Activated CD4-positive, alpha-beta T cell treated with anti-CD3 and anti-CD28 coated beads, Interleukin-2, amount 10 ng/mL, durations not matched to agents 24 days and 14 days (primary cell): ENCODE measurements at regions of chr1 and their contacts with region 1.

Region 1: DNA sequence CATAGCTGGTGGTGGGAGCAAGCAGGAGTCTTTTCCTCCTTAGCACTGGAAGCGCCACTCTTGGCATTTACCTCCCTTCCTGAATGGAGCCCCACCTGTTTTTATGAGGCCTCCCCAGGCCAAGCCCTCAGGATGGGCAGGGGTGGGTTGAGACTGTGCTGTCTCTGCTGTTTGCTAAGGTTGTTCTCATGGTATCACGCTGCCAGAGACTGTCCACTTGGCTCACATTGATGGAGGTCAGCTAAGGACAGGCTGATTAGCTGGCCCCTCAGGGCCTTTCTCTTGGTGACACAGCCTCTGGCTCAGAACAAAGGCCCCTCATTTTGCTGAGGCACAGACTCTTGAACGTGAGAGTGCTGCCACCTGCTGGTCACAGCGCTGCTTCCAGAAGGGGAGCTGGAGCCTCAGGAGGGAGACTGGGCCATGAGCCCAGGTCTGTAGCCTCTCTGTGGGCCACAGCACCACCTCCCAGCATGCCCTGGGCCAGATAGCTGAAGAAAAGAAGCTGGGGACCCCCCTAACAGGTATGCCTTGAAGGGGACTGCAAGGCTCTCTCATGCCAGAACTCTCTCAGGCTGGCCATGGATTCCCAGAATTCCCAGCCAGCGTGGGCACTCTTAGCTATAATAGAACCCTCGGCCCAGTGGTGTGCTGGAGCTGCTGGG is 85.6 kb downstream of the CD58 start:
- DNase-seq: peak; percentile 95
- H3K4me3 Mint-ChIP-seq: no peak overlapping the region
- H3K27ac Mint-ChIP-seq: no peak overlapping the region
- H3K4me1 Mint-ChIP-seq: peaks cover 10% of the 10 kb centered on the region
- H3K27me3 Mint-ChIP-seq: peaks cover 5% of the 10 kb centered on the region

Region 2: DNA sequence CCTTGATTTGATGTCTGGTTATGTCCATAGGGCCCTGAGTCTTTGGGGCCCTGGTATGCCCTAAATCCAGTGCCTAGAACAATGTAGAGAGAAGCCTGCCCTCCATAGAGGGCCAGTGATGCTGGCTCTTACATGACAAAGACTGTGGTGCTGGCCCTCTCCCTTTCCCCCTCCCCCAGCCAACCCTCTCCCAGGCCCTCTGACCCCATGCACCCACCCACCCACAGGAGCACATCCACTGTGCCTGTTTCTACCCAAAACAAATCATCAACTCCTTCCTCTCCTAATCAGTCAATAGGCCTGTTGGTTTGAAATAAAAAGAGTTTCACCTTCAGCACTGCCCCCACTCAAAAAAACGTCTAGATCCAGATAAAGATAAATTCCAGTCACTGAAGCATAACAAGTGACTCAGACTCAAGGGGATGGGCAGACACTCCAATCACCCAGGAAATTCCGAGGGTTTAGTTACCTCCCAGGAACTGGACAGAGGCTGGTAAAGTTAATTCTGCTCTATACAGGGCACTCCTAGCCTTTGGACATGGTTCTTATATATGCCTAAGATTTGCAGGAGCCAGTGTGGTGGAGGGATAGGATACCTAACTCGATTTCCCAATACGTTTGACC is 988.2 kb before region 1 on chr1:
- intact Hi-C with region 1: no loop called
- DNase-seq: no peak
- H3K4me3 Mint-ChIP-seq: no peak overlapping the region
- H3K27ac Mint-ChIP-seq: no peak overlapping the region
- H3K4me1 Mint-ChIP-seq: no peaks in the 10 kb centered on the region
- H3K27me3 Mint-ChIP-seq: peaks cover 4% of the 10 kb centered on the region

Region 3: GRCh38 chr1:116139592-116140134 is 345.5 kb before region 1 on chr1:
- intact Hi-C with region 1: loop called (anchors 1 kb)
- DNase-seq: no peak
- H3K4me3 Mint-ChIP-seq: no peak overlapping the region
- H3K27ac Mint-ChIP-seq: no peak overlapping the region
- H3K4me1 Mint-ChIP-seq: peaks cover 5% of the 10 kb centered on the region
- H3K27me3 Mint-ChIP-seq: peaks cover 20% of the 10 kb centered on the region

Region 4: DNA sequence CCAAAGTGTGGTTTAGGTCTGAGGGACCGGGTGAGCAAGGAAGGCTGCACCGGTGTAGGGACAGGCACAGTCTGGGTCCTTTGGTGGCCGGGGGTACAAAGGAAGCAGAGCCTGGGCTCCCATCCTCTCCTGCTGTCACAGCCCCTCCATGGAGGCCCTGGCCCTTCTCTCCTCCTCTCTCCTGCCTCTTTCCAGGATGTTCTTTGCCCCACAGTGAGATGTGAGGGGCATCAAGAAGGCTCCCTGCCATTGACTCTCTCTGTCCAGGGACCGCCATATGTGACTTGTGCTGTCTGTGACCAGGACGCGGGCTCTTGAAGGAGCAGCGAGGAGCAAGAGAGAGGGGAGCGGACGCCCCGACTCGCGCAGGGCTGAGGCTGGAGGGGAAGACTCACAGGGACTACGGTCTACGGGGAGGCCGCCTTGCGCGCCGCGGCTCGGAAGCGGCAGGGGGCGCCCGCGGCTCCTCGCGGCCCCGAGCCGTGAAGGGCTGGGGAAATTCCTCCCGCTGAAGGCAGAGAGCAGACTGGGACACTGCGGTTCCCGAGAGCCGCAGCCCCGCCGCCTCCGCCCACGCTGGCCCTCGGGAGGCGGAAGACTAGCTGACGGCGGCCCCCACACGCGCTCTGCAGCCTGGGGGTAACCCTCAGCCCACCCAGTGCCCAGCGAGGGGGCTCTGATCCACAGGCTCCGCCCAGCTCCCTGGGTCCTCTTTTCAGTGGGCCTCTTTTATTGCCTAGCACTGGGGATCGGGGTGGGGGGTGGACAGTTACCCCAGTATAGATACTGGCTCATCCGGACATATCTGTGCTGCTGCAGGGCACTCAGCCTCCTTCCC is 333.2 kb before region 1 on chr1:
- intact Hi-C with region 1: loop called (anchors 5 kb)
- DNase-seq: peak; percentile 94
- H3K4me3 Mint-ChIP-seq: peak overlapping the region; percentile 77
- H3K27ac Mint-ChIP-seq: peak overlapping the region; percentile 74
- H3K4me1 Mint-ChIP-seq: peaks cover 13% of the 10 kb centered on the region
- H3K27me3 Mint-ChIP-seq: peaks cover 33% of the 10 kb centered on the region

Region 5: DNA sequence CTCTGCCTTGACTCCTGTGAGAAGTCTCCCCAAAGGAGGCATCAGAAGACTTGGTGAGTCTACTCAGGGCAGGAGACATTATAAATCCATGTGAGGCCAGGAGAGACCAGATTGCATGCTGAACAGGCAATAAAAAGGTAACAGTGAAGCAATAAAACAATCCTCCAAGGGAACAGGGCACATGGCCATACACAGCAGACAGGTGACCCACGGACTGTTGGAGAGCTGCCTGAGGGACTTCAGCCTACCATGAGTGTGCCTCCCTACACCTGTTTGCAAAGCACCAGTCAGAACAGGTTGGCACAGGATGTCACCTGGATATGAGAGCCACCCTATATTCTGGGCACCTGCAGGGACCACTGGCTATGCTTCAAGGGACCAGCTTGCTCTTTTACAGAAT is 306.4 kb before region 1 on chr1:
- intact Hi-C with region 1: no loop called
- DNase-seq: no peak
- H3K4me3 Mint-ChIP-seq: no peak overlapping the region
- H3K27ac Mint-ChIP-seq: no peak overlapping the region
- H3K4me1 Mint-ChIP-seq: no peaks in the 10 kb centered on the region
- H3K27me3 Mint-ChIP-seq: peaks cover 11% of the 10 kb centered on the region

Region 6: GRCh38 chr1:116360429-116361173 is 124.6 kb before region 1 on chr1:
- intact Hi-C with region 1: loop called (anchors 1 kb)
- DNase-seq: no peak
- H3K4me3 Mint-ChIP-seq: no peak overlapping the region
- H3K27ac Mint-ChIP-seq: no peak overlapping the region
- H3K4me1 Mint-ChIP-seq: peaks cover 2% of the 10 kb centered on the region
- H3K27me3 Mint-ChIP-seq: peaks cover 6% of the 10 kb centered on the region

Region 7: DNA sequence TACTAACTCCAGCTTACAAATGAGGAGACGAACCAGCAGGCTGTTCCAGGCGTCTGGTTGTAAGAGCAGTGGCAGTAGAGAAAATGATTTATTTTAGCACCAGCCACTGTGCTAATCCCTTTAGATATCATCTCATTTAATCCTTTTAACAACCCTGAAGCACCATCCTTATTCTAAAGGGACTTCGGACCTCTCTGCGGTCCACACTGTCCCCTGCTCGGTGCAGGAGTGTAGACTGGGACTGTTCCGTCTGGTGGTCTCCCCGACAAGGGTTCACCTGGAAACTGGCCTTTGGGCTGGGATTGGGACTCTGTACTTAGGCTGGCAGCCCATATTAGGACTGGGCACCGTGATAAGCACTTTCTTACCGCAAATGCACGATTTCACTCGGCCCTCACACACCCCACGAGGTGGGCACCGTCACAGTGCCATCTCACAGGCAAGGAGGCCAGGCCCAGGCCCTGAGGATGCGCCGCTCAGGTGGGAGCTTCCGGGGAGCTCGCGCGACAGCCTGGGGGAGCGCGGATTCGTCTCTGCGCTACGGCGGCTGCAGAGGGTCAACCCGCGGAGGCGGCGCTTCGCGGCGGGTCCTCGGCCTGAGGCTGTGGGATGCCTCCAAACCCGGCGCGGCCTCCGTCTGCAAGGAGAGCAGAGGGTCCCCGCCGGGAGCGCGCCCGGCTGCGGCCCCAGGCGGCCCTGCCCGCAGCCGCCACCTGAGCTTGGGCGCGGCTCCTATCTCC is 66.9 kb before region 1 on chr1:
- intact Hi-C with region 1: loop called (anchors 10 kb)
- DNase-seq: peak; percentile 96
- H3K4me3 Mint-ChIP-seq: peak overlapping the region; percentile 89
- H3K27ac Mint-ChIP-seq: peak overlapping the region; percentile 88
- H3K4me1 Mint-ChIP-seq: peaks cover 47% of the 10 kb centered on the region
- H3K27me3 Mint-ChIP-seq: peaks cover 9% of the 10 kb centered on the region

Region 8: GRCh38 chr1:116556289-116557006 is 71.2 kb after region 1 on chr1:
- intact Hi-C with region 1: no loop called
- DNase-seq: peak; percentile 88
- H3K4me3 Mint-ChIP-seq: peak overlapping the region; percentile 19
- H3K27ac Mint-ChIP-seq: peak overlapping the region; percentile 86
- H3K4me1 Mint-ChIP-seq: peaks cover 69% of the 10 kb centered on the region
- H3K27me3 Mint-ChIP-seq: no peaks in the 10 kb centered on the region

Region 9: DNA sequence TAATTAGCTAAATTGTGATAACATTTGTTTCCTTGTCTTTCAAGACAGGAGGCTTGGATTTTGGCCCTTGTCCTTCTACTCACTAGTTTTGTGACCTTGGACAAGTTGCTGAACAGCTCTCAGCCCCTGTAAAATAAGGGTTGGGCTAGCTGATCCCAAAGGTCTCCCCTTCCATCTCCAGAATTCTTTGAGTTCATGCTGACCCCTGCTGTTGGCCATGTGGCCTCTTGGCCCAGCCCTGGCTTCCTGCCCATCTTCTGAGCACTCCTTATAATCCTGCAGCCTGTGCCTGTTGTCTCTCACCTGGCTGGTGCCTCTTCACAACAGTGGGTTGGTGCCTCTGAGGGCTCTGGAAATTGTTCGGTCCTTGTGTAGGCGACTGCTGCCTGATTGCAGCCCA is 434.6 kb after region 1 on chr1:
- intact Hi-C with region 1: no loop called
- DNase-seq: no peak
- H3K4me3 Mint-ChIP-seq: no peak overlapping the region
- H3K27ac Mint-ChIP-seq: peak overlapping the region; percentile 56
- H3K4me1 Mint-ChIP-seq: peaks cover 14% of the 10 kb centered on the region
- H3K27me3 Mint-ChIP-seq: no peaks in the 10 kb centered on the region